Sciatic nerve (tissue), 2 donors: ENCODE measurements at regions of chr9 and their contacts with region 1.

Region 1: GRCh38 chr9:108072740-108073139 is 583.2 kb upstream of the KLF4 start:
- DNase-seq: no peak
- ATAC-seq: no peak

Region 2: DNA sequence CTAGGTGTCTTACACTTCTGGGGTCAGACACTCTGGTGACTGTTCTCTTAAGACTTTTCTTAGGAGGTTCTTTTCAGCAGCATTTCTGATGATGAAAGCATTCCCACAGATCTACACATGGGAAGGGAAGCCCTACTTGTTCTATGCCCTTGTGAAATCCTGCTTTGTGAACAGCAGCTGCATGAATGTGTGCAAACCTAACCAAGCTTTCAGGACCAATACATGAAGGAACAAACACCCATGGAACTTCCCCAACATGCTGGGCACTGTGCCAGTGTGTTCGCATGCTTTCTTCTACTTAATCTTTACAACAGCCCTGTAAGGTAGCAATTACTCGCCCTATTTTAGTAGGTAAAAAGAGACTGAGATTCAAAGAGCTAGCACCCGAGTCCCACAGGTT is 143.3 kb before region 1 on chr9:
- intact Hi-C with region 1: no loop called
- DNase-seq: peak; percentile 79
- ATAC-seq: peak; percentile 64

Region 3: GRCh38 chr9:108049671-108050494 is 22.9 kb before region 1 on chr9:
- intact Hi-C with region 1: loop called (anchors 1 kb)
- DNase-seq: no peak
- ATAC-seq: no peak

Region 4: DNA sequence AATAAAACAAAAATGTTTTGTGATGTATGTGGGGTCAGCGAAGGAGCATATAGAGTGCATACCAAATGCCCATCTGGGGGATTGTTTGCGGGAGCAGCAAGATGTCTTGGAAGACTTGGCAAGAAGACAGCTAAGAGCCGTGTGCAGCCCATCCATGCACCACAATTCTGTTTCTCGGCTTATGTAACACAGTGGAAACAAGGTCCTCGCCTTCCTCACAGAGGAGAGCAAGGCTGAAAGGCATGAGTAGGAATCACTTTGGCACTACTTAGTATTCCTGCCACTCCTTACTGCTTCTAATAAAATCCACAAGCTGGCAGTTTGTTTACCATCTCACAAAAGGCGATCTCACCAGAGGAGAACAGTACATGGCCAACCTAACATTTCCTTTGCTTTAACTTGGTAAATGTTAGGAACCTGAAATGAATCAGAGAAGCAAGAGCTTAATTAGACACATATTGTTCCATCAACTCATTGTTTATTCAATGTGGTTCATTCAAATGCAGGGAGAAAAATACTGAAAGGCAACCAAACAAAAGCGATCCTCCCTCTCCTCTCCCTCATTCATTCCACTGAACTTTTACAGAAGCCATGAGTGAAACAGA is 134.9 kb after region 1 on chr9:
- intact Hi-C with region 1: no loop called
- DNase-seq: no peak
- ATAC-seq: peak; percentile 49